GM18951 (cell line): ENCODE measurements at regions of chr11 and their contacts with region 1.

Region 1: DNA sequence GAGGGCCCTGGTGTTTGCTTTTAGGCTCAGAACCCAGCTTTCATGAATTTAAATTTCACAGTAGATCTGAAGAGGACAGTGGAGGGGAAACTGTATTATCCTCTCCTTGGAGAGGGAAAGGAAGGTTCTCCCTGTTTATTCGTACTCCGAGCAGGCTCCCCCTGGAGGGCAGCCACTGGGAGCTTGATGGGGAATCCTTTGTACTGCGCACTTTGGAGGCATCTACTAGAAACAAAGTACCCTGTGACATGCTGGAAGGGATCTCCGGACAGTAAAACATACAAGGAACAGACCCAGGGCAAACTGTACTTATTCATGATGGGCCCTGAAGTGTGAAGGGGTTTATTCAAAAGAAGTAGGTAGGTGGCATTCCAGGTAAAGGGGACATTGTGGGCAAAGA is 27.2 kb downstream of the NAV2 start:
- POLR2A ChIP-seq: no peak

Region 2: GRCh38 chr11:19370100-19370861 is 369.6 kb before region 1 on chr11:
- in situ Hi-C with region 1: no loop called
- POLR2A ChIP-seq: no peak

Region 3: DNA sequence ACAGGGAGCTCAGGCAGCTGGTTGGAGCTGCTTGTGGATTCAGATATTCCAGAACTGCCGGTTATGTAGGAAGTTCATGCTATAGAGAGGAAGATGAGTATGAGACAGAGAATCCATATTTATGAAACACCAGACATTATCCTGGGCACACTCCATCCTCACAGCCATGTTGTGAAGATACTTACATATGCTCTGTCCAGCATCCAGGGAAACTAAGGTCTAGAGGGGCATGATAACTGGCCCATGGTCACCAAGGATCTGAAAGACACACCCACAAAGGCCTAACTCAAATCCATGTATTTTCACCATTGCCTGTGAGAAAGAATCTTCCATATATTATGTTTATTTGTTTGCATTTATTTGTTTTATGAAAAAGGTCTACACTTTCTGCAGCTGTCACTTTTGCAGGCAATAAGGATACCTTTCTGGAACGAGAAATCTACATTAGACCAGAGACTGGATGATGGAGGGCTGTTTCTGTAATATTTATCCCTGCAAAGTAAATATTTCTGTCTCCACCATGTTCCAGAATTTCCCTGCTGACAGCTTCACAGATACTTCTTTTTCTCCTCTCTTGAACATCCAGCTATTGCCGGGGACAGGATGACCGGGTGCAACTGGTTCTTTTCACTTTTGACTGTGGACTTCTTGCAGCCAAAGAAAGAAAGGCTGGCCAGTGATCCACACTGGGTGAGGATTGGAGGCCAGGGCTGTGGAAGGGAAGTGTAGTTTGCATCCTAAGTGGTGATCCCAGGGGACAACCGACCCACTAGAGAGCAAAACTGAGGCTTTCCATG is 173.1 kb before region 1 on chr11:
- in situ Hi-C with region 1: loop called (anchors 5 kb)
- POLR2A ChIP-seq: no peak

Region 4: DNA sequence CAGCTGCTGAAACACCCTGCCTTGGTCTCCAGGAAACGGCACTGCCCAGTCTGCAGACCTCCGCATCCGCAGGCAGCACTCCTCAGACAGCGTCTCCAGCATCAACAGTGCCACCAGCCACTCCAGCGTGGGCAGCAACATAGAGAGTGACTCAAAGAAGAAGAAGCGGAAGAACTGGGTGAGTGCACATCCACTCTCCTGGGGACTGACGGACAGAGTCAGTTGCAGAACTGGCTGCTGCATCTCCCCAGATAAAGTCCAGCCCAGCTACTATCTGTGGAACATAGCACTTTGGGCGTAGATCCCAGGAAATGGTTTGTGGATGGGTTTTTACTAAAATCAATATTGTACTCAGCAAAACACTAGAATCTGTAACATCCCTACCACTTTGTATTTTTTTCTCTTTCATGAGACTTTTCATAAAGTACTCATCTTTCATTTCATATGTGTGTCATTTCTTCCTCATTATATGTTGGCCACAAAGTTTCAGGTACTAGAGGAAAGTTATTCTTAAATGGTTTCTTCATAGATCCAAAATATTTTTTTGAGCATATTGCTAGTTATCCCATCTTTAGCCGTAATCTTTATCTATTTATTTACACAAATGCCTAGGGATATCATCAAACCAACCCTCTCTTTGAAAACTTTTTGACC is 340.3 kb after region 1 on chr11:
- in situ Hi-C with region 1: no loop called
- POLR2A ChIP-seq: no peak